Ascending aorta (tissue), 2 donors: ENCODE measurements at regions of chr16 and their contacts with region 1.

Region 1: GRCh38 chr16:29805378-29806098 is 791 bp upstream of the MAZ start:
- DNase-seq: peak; percentile 89 to 98
- H3K4me3 ChIP-seq: peak overlapping the region; percentile 68 to 87
- H3K27ac ChIP-seq: peak overlapping the region; percentile 95 to 99
- H3K4me1 ChIP-seq: peaks cover 15 to 31% of the 10 kb centered on the region in 2 donors
- H3K27me3 ChIP-seq: no peaks in the 10 kb centered on the region
- CTCF ChIP-seq: peak in 2 of 3 experiments; percentile 10 to 12

Region 2: DNA sequence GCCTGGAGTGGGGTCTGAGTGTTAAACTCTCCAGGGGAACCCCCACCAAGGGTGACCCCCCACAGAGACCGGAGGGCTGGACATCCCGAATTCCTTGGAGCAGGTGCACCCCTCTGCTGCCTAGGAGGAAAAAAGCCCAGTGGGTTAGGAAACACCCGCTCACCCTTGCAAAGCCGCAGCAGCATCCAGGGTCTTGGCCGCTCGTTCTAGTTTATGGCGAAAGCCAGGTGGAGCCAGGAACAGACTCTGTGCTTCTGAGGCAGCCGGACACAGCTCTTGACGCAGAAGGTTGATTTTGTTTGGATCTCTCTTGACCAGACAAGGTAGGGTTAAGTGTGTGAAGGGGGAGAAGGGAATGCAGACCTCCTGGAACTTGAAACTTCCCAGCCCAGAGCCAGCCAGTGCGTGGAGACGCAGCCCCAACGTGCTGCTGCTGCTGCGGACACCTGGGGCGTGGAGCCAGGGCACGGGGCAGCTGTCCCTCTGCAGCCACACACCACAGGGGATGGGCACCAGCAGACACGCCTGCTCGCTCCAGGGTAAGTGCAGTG is 666.2 kb before region 1 on chr16:
- intact Hi-C with region 1: no loop called
- DNase-seq: no peak
- H3K4me3 ChIP-seq: no peak overlapping the region
- H3K27ac ChIP-seq: no peak overlapping the region
- H3K4me1 ChIP-seq: no peaks in the 10 kb centered on the region
- H3K27me3 ChIP-seq: no peaks in the 10 kb centered on the region
- CTCF ChIP-seq: no peak

Region 3: GRCh38 chr16:29745853-29746345 is 59.6 kb before region 1 on chr16 and contains the start of gene C16orf54:
- intact Hi-C with region 1: no loop called
- DNase-seq: peak; percentile 56 to 81
- H3K4me3 ChIP-seq: peak within 1 kb of the TSS in 1 of 2 donors; percentile 55
- H3K27ac ChIP-seq: no peak within 1 kb of the TSS
- H3K4me1 ChIP-seq: no peaks in the 10 kb centered on the region
- H3K27me3 ChIP-seq: no peaks in the 10 kb centered on the region
- CTCF ChIP-seq: no peak
- total RNA-seq, gene C16orf54: 0.21 TPM

Region 4: DNA sequence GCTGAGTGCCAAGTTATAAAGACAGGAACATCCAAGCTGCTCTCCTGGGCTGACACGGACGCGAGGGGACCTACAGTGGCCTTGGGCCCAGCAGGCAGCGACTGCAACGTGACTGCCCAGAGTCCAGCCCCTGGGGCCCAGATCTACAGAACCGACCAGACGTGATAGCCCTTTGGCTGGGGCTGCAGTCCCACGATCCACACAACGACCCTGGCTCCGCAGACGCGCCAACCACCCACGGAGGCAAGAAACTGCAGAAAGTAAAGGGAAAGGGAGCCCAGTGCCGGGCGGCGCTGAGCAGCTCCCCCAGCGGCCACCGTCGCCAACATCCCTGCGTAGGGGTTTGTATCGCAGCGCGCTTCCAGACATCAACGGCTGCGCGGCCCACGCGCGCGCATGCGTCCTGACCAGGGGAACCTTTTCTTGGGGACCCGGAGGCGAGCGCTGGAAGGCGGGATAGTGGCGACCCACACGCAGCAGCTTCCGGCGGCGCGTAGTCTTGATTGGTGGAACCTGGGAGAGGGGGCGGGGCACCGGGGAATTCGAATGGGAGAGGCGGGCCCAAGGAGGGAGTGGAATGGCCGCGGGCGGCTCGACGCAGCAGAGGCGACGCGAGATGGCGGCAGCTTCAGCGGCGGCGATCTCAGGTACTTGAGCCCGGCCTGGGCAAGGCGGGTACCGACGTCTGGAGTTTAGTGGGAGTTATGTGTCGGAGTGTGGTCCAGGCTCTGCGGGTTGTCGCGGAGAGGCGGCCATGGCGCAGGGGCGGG is 15.2 kb before region 1 on chr16 and contains the start of gene KIF22:
- intact Hi-C with region 1: loop called (anchors 1 kb)
- DNase-seq: peak; percentile 94 to 100
- H3K4me3 ChIP-seq: peak within 1 kb of the TSS; percentile 58 to 89
- H3K27ac ChIP-seq: peak within 1 kb of the TSS; percentile 76 to 87
- H3K4me1 ChIP-seq: peaks cover 0 to 17% of the 10 kb centered on the region in 2 donors
- H3K27me3 ChIP-seq: no peaks in the 10 kb centered on the region
- CTCF ChIP-seq: peak; percentile 66 to 84 (median 75)
- total RNA-seq, gene KIF22: 28.6 TPM

Region 5: GRCh38 chr16:29848420-29849297 is 43.1 kb after region 1 on chr16:
- intact Hi-C with region 1: loop called (anchors 2 kb)
- DNase-seq: peak in 1 of 2 donors; percentile 84
- H3K4me3 ChIP-seq: no peak overlapping the region
- H3K27ac ChIP-seq: no peak overlapping the region
- H3K4me1 ChIP-seq: no peaks in the 10 kb centered on the region
- H3K27me3 ChIP-seq: no peaks in the 10 kb centered on the region
- CTCF ChIP-seq: peak; percentile 75 to 92 (median 82)

Region 6: GRCh38 chr16:29926005-29926710 is 120.6 kb after region 1 on chr16 and contains the start of gene KCTD13:
- intact Hi-C with region 1: loop called (anchors 5 kb)
- DNase-seq: peak; percentile 40 to 94
- H3K4me3 ChIP-seq: peak within 1 kb of the TSS; percentile 91 to 96
- H3K27ac ChIP-seq: peak within 1 kb of the TSS; percentile 75 to 80
- H3K4me1 ChIP-seq: peaks cover 11 to 17% of the 10 kb centered on the region in 2 donors
- H3K27me3 ChIP-seq: no peaks in the 10 kb centered on the region
- CTCF ChIP-seq: no peak
- total RNA-seq, gene KCTD13: 302 TPM

Region 7: GRCh38 chr16:29995911-29996772 is 190.6 kb after region 1 on chr16 and contains the start of gene INO80E:
- intact Hi-C with region 1: loop called (anchors 5 kb)
- DNase-seq: peak; percentile 91 to 99
- H3K4me3 ChIP-seq: peak within 1 kb of the TSS; percentile 69 to 77
- H3K27ac ChIP-seq: peak within 1 kb of the TSS; percentile 84 to 91
- H3K4me1 ChIP-seq: peaks cover 4 to 15% of the 10 kb centered on the region in 2 donors
- H3K27me3 ChIP-seq: no peaks in the 10 kb centered on the region
- CTCF ChIP-seq: no peak
- total RNA-seq, gene INO80E: 44.1 TPM

Region 8: GRCh38 chr16:31458844-31459721 is 1653.5 kb after region 1 on chr16 and contains the start of gene ARMC5:
- intact Hi-C with region 1: loop called (anchors 10 kb)
- DNase-seq: peak; percentile 86 to 98
- H3K4me3 ChIP-seq: peak within 1 kb of the TSS; percentile 75 to 84
- H3K27ac ChIP-seq: peak within 1 kb of the TSS; percentile 99 to 100
- H3K4me1 ChIP-seq: peaks cover 20 to 47% of the 10 kb centered on the region in 2 donors
- H3K27me3 ChIP-seq: no peaks in the 10 kb centered on the region
- CTCF ChIP-seq: peak; percentile 55 to 67 (median 64)
- total RNA-seq, gene ARMC5: 10.0 TPM

Region 9: DNA sequence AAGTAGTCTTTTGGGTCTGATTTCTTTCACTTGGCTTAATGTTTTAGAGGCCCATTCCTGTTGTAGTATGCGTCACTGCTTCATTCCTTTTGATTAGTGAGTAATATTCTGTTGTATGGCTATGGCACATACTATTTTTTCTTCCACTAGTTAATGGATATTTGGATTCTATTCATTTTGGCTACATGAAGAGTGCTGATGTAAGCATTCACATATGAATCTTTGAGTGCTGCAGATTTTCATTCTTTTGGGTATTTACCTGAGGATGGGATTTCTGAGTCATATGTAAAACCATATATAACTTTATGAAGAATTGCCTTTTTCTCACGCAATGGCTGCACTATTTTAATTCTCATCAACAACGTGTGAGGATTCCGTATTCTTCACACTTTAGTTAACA is 1835.7 kb after region 1 on chr16:
- intact Hi-C with region 1: no loop called
- DNase-seq: no peak
- H3K4me3 ChIP-seq: no peak overlapping the region
- H3K27ac ChIP-seq: no peak overlapping the region
- H3K4me1 ChIP-seq: no peaks in the 10 kb centered on the region
- H3K27me3 ChIP-seq: no peaks in the 10 kb centered on the region
- CTCF ChIP-seq: no peak